Breast epithelium (tissue), 4 donors: ENCODE measurements at regions of chr17 and their contacts with region 1.

Region 1: DNA sequence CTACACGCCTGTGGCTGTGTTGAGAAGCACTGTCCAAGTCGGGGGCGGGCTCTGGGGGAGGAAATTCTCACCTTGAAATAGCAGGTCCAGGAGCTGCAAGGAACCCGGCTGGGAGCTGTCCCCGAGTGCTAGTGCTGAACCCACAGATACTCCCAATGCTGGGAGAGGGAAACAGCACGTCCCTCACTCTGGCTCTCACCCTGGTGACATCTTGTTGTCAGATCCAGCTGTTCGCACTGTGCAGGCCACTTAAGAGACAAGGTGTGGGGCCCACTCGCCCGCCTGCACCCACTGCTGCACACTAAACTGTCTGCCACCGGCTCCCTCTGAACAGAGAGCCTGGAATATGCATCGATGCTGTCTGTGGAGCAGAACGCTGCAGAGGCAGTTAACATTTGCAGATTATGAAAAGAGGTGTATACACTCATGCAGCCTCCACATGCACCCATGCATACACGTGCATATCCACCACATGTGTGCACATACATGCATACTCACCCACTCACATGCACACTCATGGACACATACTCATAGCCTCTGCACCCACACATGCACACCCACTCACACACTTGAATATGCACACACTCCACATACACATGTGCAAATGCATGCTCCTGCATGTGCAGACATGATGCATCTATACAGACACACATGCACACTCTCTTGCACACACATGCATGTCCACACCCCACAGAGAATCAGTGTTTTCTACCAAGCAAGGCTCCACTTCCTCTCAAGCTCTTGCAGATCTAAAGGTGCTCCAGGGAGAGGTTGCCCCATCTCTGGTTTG is 42.0 kb downstream of the MGAT5B start:
- DNase-seq: peak in 1 of 2 donors; percentile 20
- H3K4me3 ChIP-seq: no peak overlapping the region
- H3K27ac ChIP-seq: no peak overlapping the region
- H3K4me1 ChIP-seq: no peaks in the 10 kb centered on the region
- H3K27me3 ChIP-seq: peaks cover 0 to 8% of the 10 kb centered on the region in 2 donors
- CTCF ChIP-seq: no peak
- POLR2A ChIP-seq: no peak

Region 2: DNA sequence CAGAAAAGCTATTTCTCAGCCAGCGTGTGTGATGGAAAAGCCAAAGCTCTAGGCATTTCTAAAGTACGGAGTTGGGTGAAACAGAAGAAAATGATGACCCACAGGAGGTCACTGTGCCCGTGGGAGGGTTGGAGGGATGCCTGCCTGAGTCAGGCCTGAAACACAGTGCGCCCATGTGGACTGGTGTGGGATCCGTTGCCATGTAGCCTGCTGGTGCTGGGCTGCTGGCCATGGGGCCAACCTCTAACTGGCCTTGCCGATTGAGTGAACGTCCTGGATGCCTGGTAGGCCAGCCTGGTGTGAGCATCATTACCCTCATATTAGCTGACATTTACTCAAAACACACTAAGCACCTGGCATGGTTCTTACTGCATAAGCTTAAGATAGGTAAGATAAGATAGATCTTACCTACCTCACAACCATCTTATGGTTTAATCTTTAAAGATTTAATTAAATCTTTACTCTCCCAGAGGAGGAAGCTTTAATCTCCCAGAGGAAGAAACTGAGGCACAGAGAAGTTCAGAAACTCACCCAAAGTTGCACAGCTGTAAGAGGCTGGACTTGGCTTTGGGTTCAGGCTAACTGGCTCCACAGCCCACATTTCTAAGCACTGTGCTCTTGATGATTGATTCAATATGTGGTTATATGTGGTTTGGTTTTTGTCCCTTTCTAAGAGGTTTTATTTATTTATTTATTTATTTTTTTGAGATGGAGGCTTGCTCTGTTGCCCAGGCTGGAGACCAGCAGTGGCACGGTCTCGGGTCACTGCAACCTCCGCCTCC is 26.2 kb before region 1 on chr17:
- intact Hi-C with region 1: loop called (anchors 2 kb)
- DNase-seq: no peak
- H3K4me3 ChIP-seq: no peak overlapping the region
- H3K27ac ChIP-seq: no peak overlapping the region
- H3K4me1 ChIP-seq: no peaks in the 10 kb centered on the region
- H3K27me3 ChIP-seq: no peaks in the 10 kb centered on the region
- CTCF ChIP-seq: no peak
- POLR2A ChIP-seq: no peak

Region 3: GRCh38 chr17:76946764-76947119 is 36.6 kb after region 1 on chr17:
- intact Hi-C with region 1: loop called (anchors 1 kb)
- DNase-seq: no peak
- H3K4me3 ChIP-seq: no peak overlapping the region
- H3K27ac ChIP-seq: no peak overlapping the region
- H3K4me1 ChIP-seq: peaks cover 0 to 3% of the 10 kb centered on the region in 2 donors
- H3K27me3 ChIP-seq: no peaks in the 10 kb centered on the region
- CTCF ChIP-seq: no peak
- POLR2A ChIP-seq: no peak